Activated naive CD4-positive, alpha-beta T cell treated with anti-CD3 and anti-CD28 coated beads for 36 hours (primary cell): ENCODE measurements at regions of chr17 and their contacts with region 1.

Region 1: GRCh38 chr17:50507871-50508572 is at the start of gene MYCBPAP:
- DNase-seq: peak; percentile 88
- H3K4me3 Mint-ChIP-seq: peak within 1 kb of the TSS; percentile 82
- H3K27ac Mint-ChIP-seq: peak within 1 kb of the TSS; percentile 79
- H3K4me1 Mint-ChIP-seq: peaks cover 51% of the 10 kb centered on the region
- H3K27me3 Mint-ChIP-seq: no peaks in the 10 kb centered on the region
- total RNA-seq, gene MYCBPAP: 5.5 to 5.8 TPM

Region 2: GRCh38 chr17:50312308-50312707 is 195.7 kb before region 1 on chr17:
- CTCF ChIA-PET with region 1: no interaction called
- intact Hi-C with region 1: loop called (anchors 1 kb)
- DNase-seq: no peak
- H3K4me3 Mint-ChIP-seq: no peak overlapping the region
- H3K27ac Mint-ChIP-seq: no peak overlapping the region
- H3K4me1 Mint-ChIP-seq: peaks cover 30% of the 10 kb centered on the region
- H3K27me3 Mint-ChIP-seq: peaks cover 10% of the 10 kb centered on the region

Region 3: GRCh38 chr17:50345432-50346312 is 162.3 kb before region 1 on chr17 and contains the start of gene XYLT2:
- CTCF ChIA-PET with region 1: no interaction called
- intact Hi-C with region 1: loop called (anchors 1 kb)
- DNase-seq: peak; percentile 90
- H3K4me3 Mint-ChIP-seq: peak within 1 kb of the TSS; percentile 89
- H3K27ac Mint-ChIP-seq: peak within 1 kb of the TSS; percentile 88
- H3K4me1 Mint-ChIP-seq: peaks cover 29% of the 10 kb centered on the region
- H3K27me3 Mint-ChIP-seq: no peaks in the 10 kb centered on the region
- total RNA-seq, gene XYLT2: 21.1 to 21.8 TPM

Region 4: GRCh38 chr17:50487213-50488096 is 20.6 kb before region 1 on chr17:
- CTCF ChIA-PET with region 1: interaction called, 6 read pairs
- intact Hi-C with region 1: loop called (anchors 1 kb)
- DNase-seq: peak; percentile 36
- H3K4me3 Mint-ChIP-seq: no peak overlapping the region
- H3K27ac Mint-ChIP-seq: peak overlapping the region; percentile 61
- H3K4me1 Mint-ChIP-seq: peaks cover 8% of the 10 kb centered on the region
- H3K27me3 Mint-ChIP-seq: no peaks in the 10 kb centered on the region

Region 5: DNA sequence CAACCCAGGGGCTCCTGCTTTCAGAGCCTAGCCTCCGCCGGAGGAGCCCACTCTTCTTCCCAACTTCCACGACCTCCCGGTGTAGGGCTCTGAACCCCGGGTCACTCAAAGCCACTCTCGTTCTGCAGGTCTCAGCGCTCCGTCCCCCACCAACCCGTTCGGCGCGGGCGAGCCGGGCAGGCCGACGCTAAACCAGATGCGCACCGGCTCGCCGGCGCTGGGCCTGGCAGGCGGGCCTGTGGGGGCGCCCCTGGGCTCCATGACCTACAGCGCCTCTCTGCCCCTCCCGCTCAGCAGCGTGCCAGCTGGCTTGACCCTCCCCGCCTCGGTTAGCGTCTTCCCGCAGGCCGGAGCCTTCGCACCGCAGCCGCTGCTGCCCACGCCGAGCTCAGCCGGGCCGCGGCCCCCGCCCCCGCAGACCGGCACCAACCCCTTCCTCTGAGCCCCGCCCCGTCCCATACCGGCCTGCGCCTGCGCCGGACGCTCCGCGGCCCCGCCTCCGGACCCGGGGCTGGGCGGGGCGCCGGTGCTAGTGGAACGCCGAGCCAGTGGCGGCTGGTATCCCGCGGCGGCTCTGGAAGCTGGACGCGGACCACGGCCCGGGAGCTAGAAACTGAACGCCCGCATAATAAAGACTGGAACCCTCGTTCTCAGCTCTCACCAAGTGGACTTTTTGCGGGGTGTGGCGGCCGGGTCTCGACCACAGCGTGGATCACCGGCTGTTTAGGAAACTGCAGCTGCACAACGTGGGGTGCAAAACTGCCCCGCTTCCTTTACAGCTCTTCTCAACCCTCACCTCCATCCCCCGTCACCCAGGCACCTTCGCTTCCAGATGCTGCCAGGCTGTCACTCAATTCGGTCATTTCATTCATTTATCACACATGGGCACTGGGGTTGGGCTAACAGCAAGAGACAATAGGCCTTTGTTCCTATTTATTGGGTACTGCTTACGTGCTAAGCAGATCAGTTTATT is 34.0 kb after region 1 on chr17:
- CTCF ChIA-PET with region 1: interaction called, 6 read pairs
- intact Hi-C with region 1: loop called (anchors 1 kb)
- DNase-seq: peak; percentile 81
- H3K4me3 Mint-ChIP-seq: peak overlapping the region; percentile 64
- H3K27ac Mint-ChIP-seq: no peak overlapping the region
- H3K4me1 Mint-ChIP-seq: peaks cover 12% of the 10 kb centered on the region
- H3K27me3 Mint-ChIP-seq: peaks cover 2% of the 10 kb centered on the region